ENCODE measurements at regions of chr5 and their contacts with region 1.

Region 1: DNA sequence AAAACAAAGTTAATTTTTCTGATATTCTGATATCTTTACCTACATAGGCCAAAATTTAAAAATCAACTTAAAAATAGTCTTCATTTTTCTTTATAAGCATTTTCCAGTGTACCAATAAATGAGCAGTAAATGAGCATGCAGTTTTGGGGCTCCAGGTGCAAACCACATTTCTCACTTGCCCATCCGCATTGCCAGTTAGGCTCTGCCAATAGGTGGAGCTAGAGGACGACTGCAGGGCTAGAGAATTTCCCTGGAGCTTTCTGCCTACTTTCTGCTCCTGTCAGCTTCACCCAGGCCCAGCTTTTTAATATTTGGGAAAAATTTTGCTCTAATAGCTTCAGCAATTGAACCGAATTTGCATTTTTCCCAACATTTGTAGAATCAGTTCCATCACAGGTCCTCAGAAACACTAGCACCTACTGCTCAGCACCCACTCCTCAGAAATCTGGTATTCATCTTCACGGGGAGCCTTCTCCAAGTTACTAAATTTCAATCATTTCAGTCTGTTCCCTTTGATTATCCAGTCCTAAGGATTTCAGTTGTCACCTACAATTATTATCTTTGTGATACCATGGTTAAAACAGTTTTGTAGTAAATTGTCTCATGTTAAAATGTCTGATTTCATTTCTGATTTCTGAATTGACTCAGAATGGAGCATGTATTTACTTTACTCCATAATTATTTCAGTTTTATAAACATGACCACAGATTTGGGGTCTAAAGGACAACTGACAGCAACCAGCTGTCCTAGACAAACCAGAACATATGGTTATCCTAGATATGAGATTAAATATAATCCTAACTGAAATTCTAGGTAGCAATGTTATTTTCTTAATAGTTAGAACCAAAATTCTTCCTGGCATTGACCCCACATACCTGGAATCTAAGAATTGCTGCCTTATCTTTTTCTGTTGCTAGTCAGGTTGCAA is 104.6 kb upstream of the FAM174A start:
- DNase-seq: peak; percentile 83
- H3K4me3 Mint-ChIP-seq: no peak overlapping the region
- H3K27ac Mint-ChIP-seq: no peak overlapping the region
- H3K4me1 Mint-ChIP-seq: no peaks in the 10 kb centered on the region
- H3K27me3 Mint-ChIP-seq: no peaks in the 10 kb centered on the region

Region 2: DNA sequence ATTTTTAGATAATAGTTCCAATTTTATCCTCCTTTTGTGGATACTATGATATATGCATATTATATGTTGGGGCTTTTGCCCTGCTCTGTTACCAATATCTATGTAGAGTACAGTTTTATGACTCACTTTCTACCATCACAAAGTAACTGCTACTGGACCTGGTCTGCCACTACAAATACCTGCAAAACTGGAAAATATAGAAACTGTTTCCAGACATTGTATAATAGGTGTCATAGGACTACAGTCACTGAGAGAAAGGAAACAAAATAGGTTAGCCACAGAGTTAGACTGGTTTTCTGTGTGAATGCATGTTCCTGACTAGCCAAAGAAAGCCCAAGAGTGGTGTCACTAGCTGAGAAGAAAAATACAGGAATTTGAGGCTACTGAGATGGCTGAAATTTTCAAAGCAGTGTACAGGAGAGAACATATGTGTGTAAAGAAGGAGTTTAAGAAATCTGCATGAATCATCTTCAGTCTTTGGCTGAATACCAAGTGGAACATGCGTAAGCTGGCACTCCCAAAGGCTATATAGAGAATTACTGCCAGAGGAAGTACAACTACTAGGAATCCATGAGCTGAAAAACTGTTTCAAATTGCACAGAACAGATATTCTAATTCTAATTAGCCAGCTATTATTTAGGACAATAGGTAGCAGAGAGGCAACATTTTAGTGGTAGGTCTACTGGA is 75.6 kb after region 1 on chr5:
- intact Hi-C with region 1: no loop called
- DNase-seq: no peak
- H3K4me3 Mint-ChIP-seq: no peak overlapping the region
- H3K27ac Mint-ChIP-seq: no peak overlapping the region
- H3K4me1 Mint-ChIP-seq: no peaks in the 10 kb centered on the region
- H3K27me3 Mint-ChIP-seq: no peaks in the 10 kb centered on the region

Region 3: DNA sequence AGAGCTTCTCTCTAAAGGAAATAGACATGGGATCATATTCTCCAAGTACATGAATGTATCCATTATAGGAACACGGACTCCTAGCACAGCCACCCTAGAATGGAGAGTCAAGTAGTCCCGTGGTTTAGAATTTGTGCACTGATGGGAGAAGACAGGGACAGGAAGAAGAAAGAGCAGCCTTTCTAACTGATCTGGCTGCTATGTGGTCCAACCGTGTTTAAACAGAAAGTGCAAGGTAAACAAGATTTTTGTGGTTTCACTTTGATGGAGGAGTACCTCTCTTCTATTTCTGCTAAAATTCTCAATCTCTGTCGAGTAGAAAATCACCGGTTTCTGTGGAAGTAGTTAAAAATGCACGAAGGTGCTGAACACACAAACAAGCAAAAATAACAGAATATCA is 301.2 kb after region 1 on chr5:
- intact Hi-C with region 1: no loop called
- DNase-seq: peak; percentile 82
- H3K4me3 Mint-ChIP-seq: peak overlapping the region; percentile 70
- H3K27ac Mint-ChIP-seq: peak overlapping the region; percentile 80
- H3K4me1 Mint-ChIP-seq: peaks cover 9% of the 10 kb centered on the region
- H3K27me3 Mint-ChIP-seq: no peaks in the 10 kb centered on the region

Region 4: GRCh38 chr5:101045689-101046088 is 615.2 kb after region 1 on chr5:
- intact Hi-C with region 1: loop called (anchors 1 kb)
- DNase-seq: no peak
- H3K4me3 Mint-ChIP-seq: no peak overlapping the region
- H3K27ac Mint-ChIP-seq: no peak overlapping the region
- H3K4me1 Mint-ChIP-seq: no peaks in the 10 kb centered on the region
- H3K27me3 Mint-ChIP-seq: no peaks in the 10 kb centered on the region

Region 5: DNA sequence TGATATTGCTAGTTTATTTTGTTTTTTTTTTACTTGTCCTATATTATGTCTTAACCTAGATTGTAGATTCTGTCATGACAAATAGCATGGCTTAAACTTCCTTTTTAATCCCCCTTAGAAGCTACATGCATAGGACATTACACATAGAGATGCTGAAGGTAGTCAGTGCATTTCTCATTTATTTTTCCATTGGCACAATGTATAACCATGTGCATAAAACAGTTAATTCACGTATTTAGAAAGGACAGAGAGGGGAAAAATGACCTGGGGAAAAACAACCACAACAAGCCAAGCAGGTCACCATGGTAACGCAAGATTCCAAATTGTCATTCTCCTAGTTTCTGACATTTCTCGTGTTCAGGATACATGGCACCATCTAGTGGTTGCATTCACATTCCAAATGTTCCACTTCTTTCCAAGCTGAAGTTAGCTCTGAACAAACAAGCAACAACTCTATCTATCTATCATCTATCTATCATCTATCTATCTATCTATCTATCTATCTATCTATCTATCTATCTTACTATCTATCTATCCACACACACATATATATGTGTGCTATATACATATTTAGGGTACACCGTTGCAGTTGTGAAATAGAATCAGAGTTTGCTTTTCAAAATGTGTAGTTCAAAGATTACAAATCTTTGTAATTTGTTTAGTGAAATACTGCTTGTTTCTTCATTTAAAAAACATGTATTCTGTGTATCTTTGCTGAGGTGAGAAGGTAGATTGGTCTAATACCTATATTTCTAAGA is 959.8 kb after region 1 on chr5:
- intact Hi-C with region 1: loop called (anchors 2 kb)
- DNase-seq: peak; percentile 58
- H3K4me3 Mint-ChIP-seq: no peak overlapping the region
- H3K27ac Mint-ChIP-seq: no peak overlapping the region
- H3K4me1 Mint-ChIP-seq: no peaks in the 10 kb centered on the region
- H3K27me3 Mint-ChIP-seq: no peaks in the 10 kb centered on the region

Region 6: DNA sequence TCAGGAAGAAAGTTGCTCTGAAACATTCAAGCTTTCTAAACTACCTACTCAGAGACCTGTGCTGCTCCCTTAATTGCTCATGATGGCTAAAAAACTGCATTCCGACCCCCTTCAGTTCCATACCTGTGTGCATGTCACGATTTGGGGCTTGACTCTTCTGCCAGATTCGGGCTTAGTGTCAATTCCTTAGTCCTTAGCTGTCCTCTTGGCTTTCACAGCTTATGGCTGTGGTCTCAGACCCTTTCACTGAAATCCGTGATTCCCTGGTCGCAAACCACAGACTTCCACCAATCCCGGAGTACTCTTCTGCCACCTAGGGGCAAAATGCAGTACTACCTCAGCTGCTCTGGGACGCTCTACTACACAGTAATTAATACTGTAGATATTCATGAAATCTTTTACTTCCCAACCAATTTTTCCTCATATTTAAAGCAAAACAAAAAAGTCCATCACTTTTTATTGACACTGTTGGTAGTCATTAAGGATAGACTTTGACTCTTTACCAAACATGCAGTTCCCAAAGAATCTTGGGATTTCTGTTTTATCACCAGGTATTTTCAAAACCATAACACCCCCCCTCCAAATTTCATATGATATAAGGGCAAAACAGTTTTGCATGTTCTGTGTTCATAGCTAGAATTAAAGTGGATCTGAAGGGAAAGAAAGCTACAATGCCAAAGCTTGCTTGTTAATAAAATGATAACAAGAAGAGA is 1248.1 kb after region 1 on chr5:
- intact Hi-C with region 1: loop called (anchors 1 kb)
- DNase-seq: peak; percentile 76
- H3K4me3 Mint-ChIP-seq: no peak overlapping the region
- H3K27ac Mint-ChIP-seq: no peak overlapping the region
- H3K4me1 Mint-ChIP-seq: no peaks in the 10 kb centered on the region
- H3K27me3 Mint-ChIP-seq: no peaks in the 10 kb centered on the region

Measured in activated CD4-positive, alpha-beta T cell treated with anti-CD3 and anti-CD28 coated beads, Interleukin-2, amount 10 ng/mL, durations not matched to agents 24 days and 14 days (primary cell).